OCI-LY7 (cell line): ENCODE measurements at regions of chr4 and their contacts with region 1.

Region 1: DNA sequence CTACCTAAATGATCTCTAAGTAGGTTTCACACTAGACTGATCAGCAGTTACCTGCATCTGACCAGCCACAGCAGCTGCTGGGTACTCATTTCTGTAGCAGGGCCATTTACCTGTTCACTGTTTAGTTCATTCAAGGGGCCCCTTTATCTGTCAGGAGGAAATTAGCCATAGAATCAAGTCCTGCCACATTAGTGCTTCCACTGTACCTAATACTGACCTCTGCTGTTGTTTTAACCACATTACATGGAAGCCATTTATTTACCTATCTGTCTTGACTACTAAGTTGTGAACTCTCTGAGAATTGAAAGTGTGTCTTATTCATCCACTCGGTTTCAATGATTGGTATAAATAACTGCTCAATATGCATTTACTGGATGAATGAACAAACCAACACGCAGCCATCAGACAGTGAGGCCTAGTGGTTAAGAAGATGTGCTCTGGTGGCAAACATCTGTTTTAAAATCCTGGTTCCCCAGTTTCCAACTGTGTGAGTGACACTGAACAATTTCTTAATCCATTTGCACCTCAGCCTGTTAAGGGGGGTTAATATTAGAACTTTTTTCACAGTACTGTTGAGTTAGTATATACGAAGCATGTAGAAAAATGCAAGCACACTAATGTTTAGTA is 30.0 kb upstream of the ANXA5 start:
- DNase-seq: peak; percentile 55
- H3K4me3 ChIP-seq: no peak overlapping the region
- H3K27ac ChIP-seq: no peak overlapping the region
- H3K4me1 ChIP-seq: no peaks in the 10 kb centered on the region
- CTCF ChIP-seq: peak; percentile 80

Region 2: DNA sequence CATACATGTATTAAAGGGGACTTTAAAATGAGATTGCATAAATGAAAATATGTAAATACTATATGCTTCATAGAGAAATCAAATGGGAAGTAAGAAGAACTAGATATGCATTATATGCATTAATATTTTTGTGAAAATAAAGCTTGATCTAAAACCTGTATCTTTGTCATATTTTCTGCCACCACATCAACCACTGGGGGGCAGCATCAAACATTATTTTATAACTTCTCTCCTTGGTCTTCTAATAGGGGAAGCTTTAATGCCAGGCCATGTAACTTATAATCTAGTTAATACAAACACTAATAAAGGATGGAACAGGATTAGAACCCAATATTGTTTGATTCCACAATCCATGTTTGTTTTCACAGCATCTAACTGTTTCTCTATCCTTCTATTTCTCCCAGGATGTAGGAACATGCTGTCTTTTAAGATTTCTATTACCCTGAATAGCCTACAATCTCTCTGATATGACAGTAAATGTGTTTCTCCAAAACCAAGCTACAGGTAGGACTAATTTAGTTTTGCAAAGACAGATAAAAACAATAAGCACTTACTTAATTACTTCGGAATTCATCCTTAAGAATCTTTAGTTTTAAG is 355.9 kb before region 1 on chr4:
- CTCF ChIA-PET with region 1: no interaction called
- POLR2A ChIA-PET with region 1: no interaction called
- intact Hi-C with region 1: loop called (anchors 10 kb)
- DNase-seq: peak; percentile 27
- H3K4me3 ChIP-seq: no peak overlapping the region
- H3K27ac ChIP-seq: no peak overlapping the region
- H3K4me1 ChIP-seq: no peaks in the 10 kb centered on the region
- CTCF ChIP-seq: peak; percentile 86

Region 3: GRCh38 chr4:121462660-121463261 is 264.0 kb before region 1 on chr4:
- CTCF ChIA-PET with region 1: no interaction called
- POLR2A ChIA-PET with region 1: no interaction called
- intact Hi-C with region 1: loop called (anchors 10 kb)
- DNase-seq: peak; percentile 71
- H3K4me3 ChIP-seq: no peak overlapping the region
- H3K27ac ChIP-seq: no peak overlapping the region
- H3K4me1 ChIP-seq: no peaks in the 10 kb centered on the region
- CTCF ChIP-seq: peak; percentile 87